Ovary (tissue), 10 donors: ENCODE measurements at regions of chr13 and their contacts with region 1.

Region 1: GRCh38 chr13:49792550-49793324 is at the start of gene KPNA3:
- DNase-seq: peak; percentile 94 to 98 (median 95)
- H3K4me3 ChIP-seq: peak within 1 kb of the TSS; percentile 71
- H3K27ac ChIP-seq: peak within 1 kb of the TSS; percentile 76 to 92
- H3K4me1 ChIP-seq: peaks cover 5% of the 10 kb centered on the region
- H3K27me3 ChIP-seq: no peaks in the 10 kb centered on the region
- CTCF ChIP-seq: peak in 1 of 3 donors; percentile 10
- EP300 ChIP-seq: no peak
- POLR2A ChIP-seq: no peak
- total RNA-seq, gene KPNA3: 10.8 to 30.9 (median 23.9) TPM

Region 2: GRCh38 chr13:49690992-49691886 is 101.5 kb before region 1 on chr13 and contains the start of gene EBPL:
- intact Hi-C with region 1: loop called in 2 of 4 experiments (anchors 1 to 5 kb)
- DNase-seq: peak; percentile 91 to 95 (median 94)
- H3K4me3 ChIP-seq: peak within 1 kb of the TSS; percentile 69
- H3K27ac ChIP-seq: peak within 1 kb of the TSS; percentile 74 to 90
- H3K4me1 ChIP-seq: peaks cover 5% of the 10 kb centered on the region
- H3K27me3 ChIP-seq: no peaks in the 10 kb centered on the region
- CTCF ChIP-seq: peak in 1 of 3 donors; percentile 12
- EP300 ChIP-seq: no peak
- POLR2A ChIP-seq: peak; percentile 51
- total RNA-seq, gene EBPL: 48.7 to 112 (median 60.2) TPM

Region 3: GRCh38 chr13:50882816-50883435 is 1090.2 kb after region 1 on chr13:
- intact Hi-C with region 1: loop called in 1 of 4 experiments (anchors 5 kb)
- DNase-seq: no peak
- H3K4me3 ChIP-seq: no peak overlapping the region
- H3K27ac ChIP-seq: no peak overlapping the region
- H3K4me1 ChIP-seq: no peaks in the 10 kb centered on the region
- H3K27me3 ChIP-seq: no peaks in the 10 kb centered on the region
- CTCF ChIP-seq: no peak
- EP300 ChIP-seq: no peak
- POLR2A ChIP-seq: no peak